ENCODE measurements at regions of chr7 and their contacts with region 1.

Region 1: GRCh38 chr7:25500393-25500921 is 272.2 kb upstream of the NPVF start:
- DNase-seq: no peak
- H3K4me3 ChIP-seq: no peak overlapping the region
- H3K27ac ChIP-seq: no peak overlapping the region
- H3K4me1 ChIP-seq: no peaks in the 10 kb centered on the region
- H3K27me3 ChIP-seq: peaks cover 3% of the 10 kb centered on the region
- CTCF ChIP-seq: no peak

Region 2: GRCh38 chr7:24965831-24966709 is 534.4 kb before region 1 on chr7:
- CTCF ChIA-PET with region 1: no interaction called
- dilution Hi-C with region 1: no loop called
- in situ Hi-C with region 1: no loop called
- intact Hi-C with region 1: no loop called
- DNase-seq: peak; percentile 76
- H3K4me3 ChIP-seq: no peak overlapping the region
- H3K27ac ChIP-seq: peak overlapping the region; percentile 55
- H3K4me1 ChIP-seq: peaks cover 70% of the 10 kb centered on the region
- H3K27me3 ChIP-seq: no peaks in the 10 kb centered on the region
- CTCF ChIP-seq: no peak

Region 3: GRCh38 chr7:25557379-25557917 is 57.0 kb after region 1 on chr7:
- CTCF ChIA-PET with region 1: no interaction called
- dilution Hi-C with region 1: loop called (anchors 5 kb)
- in situ Hi-C with region 1: no loop called
- intact Hi-C with region 1: no loop called
- DNase-seq: no peak
- H3K4me3 ChIP-seq: no peak overlapping the region
- H3K27ac ChIP-seq: no peak overlapping the region
- H3K4me1 ChIP-seq: no peaks in the 10 kb centered on the region
- H3K27me3 ChIP-seq: peaks cover 3% of the 10 kb centered on the region
- CTCF ChIP-seq: no peak

Region 4: DNA sequence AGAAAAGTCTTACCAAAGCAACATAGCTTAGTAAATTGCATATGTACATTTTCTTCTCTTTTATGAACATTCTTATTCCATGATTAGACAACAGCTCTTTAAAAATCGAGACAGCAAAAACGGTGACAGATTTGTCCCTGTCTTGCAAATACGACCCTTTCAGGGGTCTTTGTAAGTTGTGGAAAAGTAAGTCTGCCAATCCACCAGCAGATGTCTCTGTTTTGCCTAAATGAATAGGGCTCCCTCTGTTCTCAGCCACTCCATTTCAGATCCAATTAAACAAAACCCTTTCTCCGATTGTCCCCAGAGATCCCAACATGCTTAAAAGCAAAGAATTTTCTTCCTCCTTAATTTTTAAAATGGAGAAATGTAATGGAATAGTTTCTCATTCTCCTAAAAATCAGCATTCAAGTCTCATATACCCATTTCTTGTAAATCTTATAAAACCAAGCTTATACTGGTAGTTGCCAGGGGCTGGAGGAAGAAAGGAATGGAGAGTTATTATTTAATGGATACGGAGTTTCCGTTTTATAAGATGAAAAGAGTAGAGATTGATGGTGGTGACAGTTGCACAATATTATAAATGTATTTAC is 590.6 kb after region 1 on chr7:
- CTCF ChIA-PET with region 1: no interaction called
- dilution Hi-C with region 1: no loop called
- in situ Hi-C with region 1: no loop called
- intact Hi-C with region 1: no loop called
- DNase-seq: peak; percentile 44
- H3K4me3 ChIP-seq: no peak overlapping the region
- H3K27ac ChIP-seq: no peak overlapping the region
- H3K4me1 ChIP-seq: peaks cover 33% of the 10 kb centered on the region
- H3K27me3 ChIP-seq: no peaks in the 10 kb centered on the region
- CTCF ChIP-seq: peak; percentile 56 to 77